Activated naive CD4-positive, alpha-beta T cell treated with anti-CD3 and anti-CD28 coated beads for 36 hours (primary cell): ENCODE measurements at regions of chr16 and their contacts with region 1.

Region 1: GRCh38 chr16:3150346-3151218 is 15.8 kb downstream of the ZNF213 start:
- DNase-seq: peak; percentile 100
- H3K4me3 Mint-ChIP-seq: peak overlapping the region; percentile 88
- H3K27ac Mint-ChIP-seq: peak overlapping the region; percentile 86
- H3K4me1 Mint-ChIP-seq: peaks cover 21% of the 10 kb centered on the region
- H3K27me3 Mint-ChIP-seq: peaks cover 4% of the 10 kb centered on the region

Region 2: GRCh38 chr16:2911580-2912329 is 238.8 kb before region 1 on chr16 and contains the start of gene FLYWCH1:
- CTCF ChIA-PET with region 1: no interaction called
- intact Hi-C with region 1: loop called (anchors 10 kb)
- DNase-seq: peak; percentile 100
- H3K4me3 Mint-ChIP-seq: peak within 1 kb of the TSS; percentile 88
- H3K27ac Mint-ChIP-seq: peak within 1 kb of the TSS; percentile 79
- H3K4me1 Mint-ChIP-seq: peaks cover 27% of the 10 kb centered on the region
- H3K27me3 Mint-ChIP-seq: no peaks in the 10 kb centered on the region
- total RNA-seq, gene FLYWCH1: 33.5 to 35.4 TPM

Region 3: DNA sequence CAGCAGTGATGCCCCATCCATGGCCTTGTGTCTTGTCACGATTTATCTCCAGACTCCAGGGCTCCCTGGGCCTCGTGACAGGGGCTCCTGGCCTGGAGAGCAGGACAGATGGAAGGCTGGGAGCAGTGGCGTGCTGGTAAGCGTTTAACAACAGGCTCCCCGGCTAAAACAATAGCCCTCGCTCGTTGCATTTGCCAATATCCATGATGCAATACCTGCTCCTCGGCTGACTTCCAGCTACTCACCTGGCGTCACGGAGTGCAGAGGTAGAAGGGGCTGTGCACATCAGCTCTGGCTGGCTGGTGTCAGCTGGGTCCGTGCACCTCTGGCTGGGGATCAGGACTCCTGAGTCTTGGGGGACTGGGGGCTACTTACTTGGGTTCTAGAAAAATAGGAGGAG is 112.3 kb before region 1 on chr16:
- CTCF ChIA-PET with region 1: no interaction called
- intact Hi-C with region 1: no loop called
- DNase-seq: no peak
- H3K4me3 Mint-ChIP-seq: no peak overlapping the region
- H3K27ac Mint-ChIP-seq: no peak overlapping the region
- H3K4me1 Mint-ChIP-seq: peaks cover 9% of the 10 kb centered on the region
- H3K27me3 Mint-ChIP-seq: peaks cover 59% of the 10 kb centered on the region

Region 4: DNA sequence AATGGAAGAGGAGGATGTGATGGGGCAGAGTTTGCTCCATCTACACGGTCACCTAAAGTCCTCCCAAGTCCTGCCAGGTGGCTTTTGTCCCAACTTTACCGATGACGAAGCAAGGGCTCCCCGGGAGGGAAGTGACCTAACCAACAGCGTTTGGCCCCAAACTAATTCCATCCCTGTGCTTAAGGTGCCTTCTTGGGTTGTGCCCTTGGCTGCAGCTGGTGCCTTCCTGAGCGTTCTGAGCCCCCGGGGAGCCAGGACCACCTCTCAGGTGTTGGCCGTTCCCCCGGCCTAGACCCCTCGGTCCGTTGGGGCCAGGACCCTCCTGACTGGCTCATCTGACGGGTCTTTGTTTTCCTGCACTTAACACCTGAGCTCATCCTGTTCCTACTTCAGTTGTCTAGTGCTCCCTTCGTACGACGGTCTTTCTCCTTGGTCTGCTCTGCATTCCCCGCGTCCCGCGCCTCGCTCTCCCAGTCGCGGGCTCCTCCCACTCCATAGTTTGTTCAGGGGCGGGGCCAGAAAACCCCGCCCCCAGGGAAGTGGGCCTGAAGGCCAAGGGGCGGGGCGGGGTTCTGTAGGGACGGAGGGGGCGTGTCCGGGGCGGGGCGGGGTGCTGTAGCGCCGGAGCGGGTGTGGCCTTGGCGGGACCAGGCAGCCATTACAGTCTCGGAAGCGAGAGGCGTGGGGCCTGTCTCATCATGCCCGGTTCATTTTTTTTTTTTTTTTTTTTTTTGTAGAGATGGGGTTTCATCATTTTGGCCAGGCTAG is 50.7 kb before region 1 on chr16:
- CTCF ChIA-PET with region 1: interaction called, 6 read pairs
- intact Hi-C with region 1: loop called (anchors 1 kb)
- DNase-seq: peak; percentile 97
- H3K4me3 Mint-ChIP-seq: peak overlapping the region; percentile 69
- H3K27ac Mint-ChIP-seq: no peak overlapping the region
- H3K4me1 Mint-ChIP-seq: peaks cover 36% of the 10 kb centered on the region
- H3K27me3 Mint-ChIP-seq: no peaks in the 10 kb centered on the region

Region 5: GRCh38 chr16:3134564-3135417 is 15.8 kb before region 1 on chr16 and contains the start of gene ZNF213:
- CTCF ChIA-PET with region 1: interaction called, 62 read pairs
- intact Hi-C with region 1: loop called (anchors 1 kb)
- DNase-seq: peak; percentile 97
- H3K4me3 Mint-ChIP-seq: peak within 1 kb of the TSS; percentile 99
- H3K27ac Mint-ChIP-seq: peak within 1 kb of the TSS; percentile 91
- H3K4me1 Mint-ChIP-seq: peaks cover 29% of the 10 kb centered on the region
- H3K27me3 Mint-ChIP-seq: no peaks in the 10 kb centered on the region
- total RNA-seq, gene ZNF213: 6.1 to 6.5 TPM

Region 6: GRCh38 chr16:3173892-3174617 is 23.5 kb after region 1 on chr16:
- CTCF ChIA-PET with region 1: interaction called, 3 read pairs
- intact Hi-C with region 1: loop called (anchors 1 kb)
- DNase-seq: peak; percentile 62
- H3K4me3 Mint-ChIP-seq: peak overlapping the region; percentile 70
- H3K27ac Mint-ChIP-seq: peak overlapping the region; percentile 50
- H3K4me1 Mint-ChIP-seq: peaks cover 40% of the 10 kb centered on the region
- H3K27me3 Mint-ChIP-seq: peaks cover 57% of the 10 kb centered on the region

Region 7: DNA sequence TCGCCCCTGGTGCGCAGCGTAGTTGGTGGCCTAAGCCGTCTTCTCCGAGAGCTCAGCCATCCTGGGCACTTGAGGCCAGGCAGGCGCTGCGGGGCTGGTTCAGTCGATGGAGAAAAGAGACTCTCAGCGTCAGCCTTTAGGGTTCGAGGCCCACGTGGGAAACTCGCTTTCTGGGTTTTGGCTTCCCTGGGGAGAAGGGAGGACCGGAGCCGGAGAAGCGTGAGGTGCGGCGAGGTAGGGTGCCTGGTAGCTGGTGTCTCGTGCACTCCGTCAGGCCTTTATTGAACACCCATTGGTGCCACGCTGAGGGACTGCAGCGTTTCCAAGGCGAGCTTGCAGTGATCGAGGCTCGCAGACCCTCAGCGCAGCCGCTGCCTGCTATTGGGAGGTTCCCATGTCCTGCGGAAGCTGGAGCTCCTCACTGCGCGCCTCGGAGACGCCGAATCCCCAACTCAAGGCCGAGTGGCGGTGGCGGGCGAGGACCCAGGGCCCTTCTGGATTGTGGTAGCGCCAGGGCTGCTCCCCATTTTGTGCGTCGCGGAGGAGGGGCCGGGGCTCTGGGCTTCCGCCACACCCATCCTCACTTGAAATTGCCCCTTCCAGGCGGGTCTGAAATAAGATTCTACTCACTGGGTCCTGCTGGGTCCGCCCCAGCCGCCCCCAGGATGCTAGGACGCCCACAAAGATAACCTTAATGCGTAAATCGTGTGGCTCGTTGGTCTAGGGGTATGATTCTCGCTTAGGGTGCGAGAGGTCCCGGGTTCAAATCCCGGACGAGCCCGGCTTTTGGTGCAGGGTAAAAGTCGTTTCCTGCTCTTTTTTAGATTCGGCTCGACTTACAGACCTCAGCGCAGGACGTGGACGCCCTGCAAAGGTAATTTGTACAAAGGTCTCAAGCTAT is 38.6 kb after region 1 on chr16:
- CTCF ChIA-PET with region 1: interaction called, 3 read pairs
- intact Hi-C with region 1: loop called (anchors 2 kb)
- DNase-seq: peak; percentile 76
- H3K4me3 Mint-ChIP-seq: peak overlapping the region; percentile 79
- H3K27ac Mint-ChIP-seq: peak overlapping the region; percentile 84
- H3K4me1 Mint-ChIP-seq: peaks cover 46% of the 10 kb centered on the region
- H3K27me3 Mint-ChIP-seq: peaks cover 73% of the 10 kb centered on the region

Region 8: DNA sequence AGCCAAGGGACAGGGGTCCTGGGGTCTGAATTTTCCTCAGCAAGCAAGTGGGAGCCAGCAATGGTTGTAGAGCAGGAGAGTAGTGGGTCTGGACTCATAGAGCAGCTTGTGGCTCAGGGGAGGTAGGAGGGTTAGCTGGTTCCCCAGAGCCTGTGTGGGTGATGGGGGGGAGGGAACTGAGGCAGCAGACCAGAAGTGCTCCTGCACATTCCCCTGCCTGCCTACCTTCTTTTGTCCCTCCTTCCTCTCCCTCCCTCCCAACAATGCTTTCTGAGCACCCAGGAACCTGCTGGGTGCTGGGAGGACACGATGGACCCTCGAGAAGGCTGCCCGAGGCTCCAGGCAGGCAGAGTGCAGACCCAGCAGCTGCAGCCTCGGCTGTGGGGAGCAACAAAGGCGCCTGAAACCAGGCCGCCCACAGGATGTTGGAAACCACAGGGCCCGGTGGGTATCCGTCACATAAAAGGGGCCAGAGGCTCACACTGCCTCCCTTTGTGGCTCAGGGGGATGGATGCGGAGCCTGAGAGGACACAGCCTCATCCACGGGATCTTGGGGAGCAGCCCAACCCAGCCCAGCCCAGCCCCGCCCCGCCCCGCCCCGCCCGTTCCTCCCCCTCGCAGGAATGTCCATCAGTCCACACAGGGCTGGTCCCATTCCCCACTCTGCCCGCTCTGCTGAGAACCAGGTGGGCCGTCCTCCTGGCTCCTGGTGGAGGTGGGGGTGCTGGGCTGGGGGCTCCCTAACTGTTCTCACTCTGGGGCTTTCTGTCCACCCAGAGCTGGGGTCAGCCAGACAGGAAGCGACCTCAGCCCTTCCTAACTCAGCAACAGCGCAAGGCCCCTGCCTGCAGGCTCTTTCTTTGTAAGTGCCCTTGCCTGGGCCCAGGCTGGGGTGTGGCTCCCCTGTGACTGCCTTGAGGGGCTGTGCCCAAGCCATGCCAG is 428.3 kb after region 1 on chr16:
- CTCF ChIA-PET with region 1: no interaction called
- intact Hi-C with region 1: loop called (anchors 5 kb)
- DNase-seq: peak; percentile 77
- H3K4me3 Mint-ChIP-seq: peak overlapping the region; percentile 95
- H3K27ac Mint-ChIP-seq: peak overlapping the region; percentile 78
- H3K4me1 Mint-ChIP-seq: peaks cover 41% of the 10 kb centered on the region
- H3K27me3 Mint-ChIP-seq: no peaks in the 10 kb centered on the region